AG04450 (cell line): ENCODE measurements at regions of chr11 and their contacts with region 1.

Region 1: DNA sequence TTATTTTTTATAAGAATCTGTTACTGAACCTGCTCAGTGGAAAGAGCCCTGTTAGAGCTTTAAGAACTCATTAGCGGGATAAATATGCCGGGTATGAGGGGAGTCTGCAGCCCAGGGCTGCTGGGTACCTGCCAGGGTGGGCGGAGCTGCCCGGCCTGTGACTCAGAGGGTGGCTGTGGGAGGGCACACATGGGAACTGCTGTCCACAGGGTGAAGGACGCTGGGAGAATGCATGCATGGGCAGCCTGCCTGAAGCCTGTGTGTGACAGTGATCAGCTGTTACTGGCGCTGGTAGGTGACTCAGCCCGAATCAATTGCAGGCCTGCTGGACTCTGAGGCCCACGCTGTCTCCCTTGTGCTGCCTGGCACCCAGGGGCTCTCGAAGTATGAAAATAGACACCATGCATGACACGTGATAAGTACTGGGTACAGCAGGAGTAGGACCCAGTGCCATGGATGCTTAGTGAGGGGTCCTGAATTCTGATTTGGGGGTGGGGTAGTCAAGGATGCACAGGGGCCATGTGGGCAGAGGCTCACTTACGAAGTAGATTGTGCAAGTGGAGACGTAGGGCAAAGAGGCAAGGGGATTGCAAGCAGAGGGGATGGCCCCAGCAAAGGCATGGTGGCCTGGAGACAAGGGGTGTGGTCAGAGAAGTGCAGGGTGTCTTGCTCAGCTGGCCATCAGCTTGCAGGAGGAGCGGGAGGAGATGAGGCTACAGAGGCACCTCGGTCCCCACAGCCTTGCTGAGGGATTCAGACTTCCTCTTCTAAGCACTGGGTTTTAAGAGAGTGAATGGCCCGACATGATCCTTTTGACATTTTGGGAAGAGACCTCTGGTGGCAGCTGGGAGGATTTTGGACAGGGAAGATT is 36.5 kb downstream of the GRIK4 start:
- DNase-seq: peak; percentile 93
- H3K4me3 ChIP-seq: no peak overlapping the region
- H3K27ac ChIP-seq: peak overlapping the region; percentile 94
- H3K27me3 ChIP-seq: no peaks in the 10 kb centered on the region
- CTCF ChIP-seq: peak; percentile 13; the same call in 1 of the 2 replicates

Region 2: DNA sequence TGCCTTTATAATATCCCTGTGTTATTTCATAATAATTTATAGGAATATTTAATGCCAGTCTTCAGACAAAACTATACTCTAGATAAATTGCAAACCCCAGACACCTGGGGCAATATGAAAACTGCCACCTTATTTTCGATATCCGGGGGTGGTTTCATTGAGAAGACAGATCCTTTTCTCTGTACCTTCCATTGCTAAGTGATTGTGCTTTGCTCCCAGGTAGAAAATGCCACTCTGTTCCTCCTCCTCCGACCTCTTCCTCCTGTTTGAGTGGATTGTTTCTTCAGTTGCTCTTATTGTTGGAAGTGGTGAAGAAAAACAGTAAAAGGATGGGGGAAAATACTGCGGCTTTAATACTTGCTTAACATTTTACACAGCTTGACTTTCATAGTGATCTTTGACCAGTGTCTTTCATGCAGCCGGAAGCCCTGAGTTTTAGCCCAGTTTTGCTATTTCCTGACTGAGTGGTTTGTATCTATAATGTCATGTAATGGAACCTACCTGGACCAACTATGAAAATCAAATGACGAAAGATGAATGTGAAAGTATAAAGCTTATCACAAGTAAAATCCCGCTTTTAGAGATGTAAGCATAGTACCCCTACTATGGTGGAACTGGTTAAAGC is 42.1 kb before region 1 on chr11:
- CTCF ChIA-PET with region 1: no interaction called
- POLR2A ChIA-PET with region 1: no interaction called
- DNase-seq: no peak
- H3K4me3 ChIP-seq: no peak overlapping the region
- H3K27ac ChIP-seq: no peak overlapping the region
- H3K27me3 ChIP-seq: peaks cover 13% of the 10 kb centered on the region
- CTCF ChIP-seq: no peak

Region 3: DNA sequence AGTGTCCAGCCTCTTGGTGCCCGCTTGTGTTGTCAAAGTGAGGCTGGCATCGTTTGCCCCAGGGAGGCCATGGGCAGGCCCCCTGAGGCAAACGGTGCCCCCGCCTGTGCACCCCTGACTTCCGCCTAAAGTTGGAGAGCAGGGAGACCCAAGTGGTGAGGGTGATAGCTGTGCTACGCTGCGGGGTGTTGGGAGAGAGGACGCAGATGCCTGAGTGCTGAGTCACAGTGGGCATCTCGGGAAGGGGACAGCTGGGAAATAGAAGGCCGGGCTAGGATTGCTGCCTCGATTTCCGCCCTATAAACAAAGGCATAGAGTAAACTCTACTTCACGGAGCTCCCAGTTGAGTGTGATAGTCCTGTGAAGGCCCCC is 30.7 kb before region 1 on chr11:
- CTCF ChIA-PET with region 1: no interaction called
- POLR2A ChIA-PET with region 1: interaction called, 11 read pairs
- DNase-seq: no peak
- H3K4me3 ChIP-seq: no peak overlapping the region
- H3K27ac ChIP-seq: peak overlapping the region; percentile 80
- H3K27me3 ChIP-seq: no peaks in the 10 kb centered on the region
- CTCF ChIP-seq: no peak